Activated CD4-positive, alpha-beta memory T cell treated with anti-CD3 and anti-CD28 coated beads, Interleukin-2, amount 10 ng/mL, durations not matched to agents 7 days and 5 days (primary cell): ENCODE measurements at regions of chr22 and their contacts with region 1.

Region 1: DNA sequence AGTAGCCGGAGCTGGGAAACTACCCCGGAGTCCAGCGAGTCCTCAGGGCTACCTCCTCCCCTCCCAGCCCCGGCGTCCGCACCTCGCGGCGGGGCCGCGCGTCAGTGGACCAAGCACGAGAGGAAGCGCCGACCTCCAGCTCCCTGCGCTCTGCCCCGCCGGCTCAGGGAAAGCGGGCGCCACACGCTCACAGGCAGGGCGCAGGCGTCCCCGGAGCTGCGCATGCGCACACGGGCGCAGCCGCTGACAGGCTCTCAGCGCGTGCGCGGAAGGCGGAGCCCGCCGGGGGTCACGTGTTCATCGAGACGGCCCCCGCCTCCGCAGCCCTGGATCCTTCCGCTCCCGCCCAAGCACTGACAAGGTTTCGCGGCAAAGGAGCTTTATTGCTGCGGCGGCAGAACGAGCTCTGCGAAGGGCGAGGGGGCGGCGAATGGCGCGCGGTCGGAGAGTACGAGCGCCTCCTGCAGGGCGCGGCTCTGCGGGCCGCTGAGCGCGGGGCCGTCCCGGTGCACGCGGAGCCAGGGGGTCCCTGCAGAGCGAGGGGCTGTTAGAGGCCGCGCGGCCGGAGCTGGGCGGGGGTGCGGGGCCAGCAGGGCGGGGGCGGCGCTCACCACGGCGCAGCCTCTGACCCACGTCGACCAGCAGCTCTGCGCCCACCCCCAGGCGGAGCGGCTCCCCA is at the start of gene SCO2:
- DNase-seq: peak; percentile 98
- H3K4me3 Mint-ChIP-seq: peak within 1 kb of the TSS; percentile 86
- H3K27ac Mint-ChIP-seq: peak within 1 kb of the TSS; percentile 89
- H3K4me1 Mint-ChIP-seq: peaks cover 43% of the 10 kb centered on the region
- H3K27me3 Mint-ChIP-seq: no peaks in the 10 kb centered on the region
- total RNA-seq, gene SCO2: 6.4 to 7.0 TPM

Region 2: DNA sequence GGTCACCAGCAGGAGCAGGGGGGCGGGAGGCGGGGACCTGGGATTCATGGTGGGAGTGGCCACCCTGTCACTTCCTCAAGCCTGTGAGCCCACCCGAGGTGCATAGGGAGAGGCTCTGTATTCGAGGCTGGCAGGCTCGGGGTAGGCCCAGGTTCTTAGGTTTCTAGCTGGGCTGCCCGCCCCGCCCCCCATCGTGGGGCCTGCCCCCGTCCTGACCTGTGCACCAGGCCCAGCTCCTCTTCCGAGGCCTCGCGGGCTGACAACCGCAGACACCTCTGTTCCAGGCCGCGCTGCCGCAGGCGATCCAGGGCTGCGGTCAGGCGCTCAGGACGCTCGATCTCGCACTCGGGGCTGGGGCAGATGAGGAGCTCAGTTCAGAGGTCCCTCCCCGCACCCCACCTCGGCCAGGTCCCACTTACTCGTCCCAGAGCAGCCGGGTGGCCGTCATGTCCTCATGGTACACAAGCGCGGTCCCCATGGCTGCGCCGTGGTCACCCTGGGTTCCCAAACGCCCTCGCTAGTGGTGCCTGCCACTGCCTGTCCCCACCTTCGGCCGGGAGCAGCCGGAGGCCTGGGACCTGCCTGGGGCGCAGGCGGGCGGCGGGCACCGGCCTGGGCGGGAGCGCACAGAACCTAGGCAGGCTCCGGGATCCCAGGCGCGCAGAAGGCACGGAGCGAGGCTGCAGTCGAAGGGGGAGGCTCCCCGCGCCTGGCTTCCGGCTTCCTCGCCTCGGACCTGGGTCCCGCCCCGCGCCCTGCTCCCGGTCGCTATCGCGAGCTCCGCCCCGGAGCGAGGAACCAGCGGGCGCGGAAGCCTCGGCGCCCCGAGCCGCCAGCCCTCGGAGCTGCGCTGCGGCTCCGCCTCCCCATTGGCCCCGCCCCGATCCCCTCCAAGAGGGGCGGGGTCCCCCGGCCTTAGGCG is 274.7 kb before region 1 on chr22 and contains the start of gene HDAC10:
- CTCF ChIA-PET with region 1: interaction called, 6 read pairs
- POLR2A ChIA-PET with region 1: interaction called, 16 read pairs
- DNase-seq: peak; percentile 90
- H3K4me3 Mint-ChIP-seq: peak within 1 kb of the TSS; percentile 82
- H3K27ac Mint-ChIP-seq: peak within 1 kb of the TSS; percentile 69
- H3K4me1 Mint-ChIP-seq: peaks cover 29% of the 10 kb centered on the region
- H3K27me3 Mint-ChIP-seq: no peaks in the 10 kb centered on the region
- total RNA-seq, gene HDAC10: 83.7 to 90.0 TPM

Region 3: GRCh38 chr22:50474668-50475492 is 50.6 kb before region 1 on chr22 and contains the start of gene SBF1:
- CTCF ChIA-PET with region 1: interaction called, 21 read pairs
- POLR2A ChIA-PET with region 1: interaction called, 48 read pairs
- DNase-seq: peak; percentile 91
- H3K4me3 Mint-ChIP-seq: peak within 1 kb of the TSS; percentile 92
- H3K27ac Mint-ChIP-seq: peak within 1 kb of the TSS; percentile 97
- H3K4me1 Mint-ChIP-seq: peaks cover 52% of the 10 kb centered on the region
- H3K27me3 Mint-ChIP-seq: peaks cover 3% of the 10 kb centered on the region
- total RNA-seq, gene SBF1: 181 to 196 TPM

Region 4: DNA sequence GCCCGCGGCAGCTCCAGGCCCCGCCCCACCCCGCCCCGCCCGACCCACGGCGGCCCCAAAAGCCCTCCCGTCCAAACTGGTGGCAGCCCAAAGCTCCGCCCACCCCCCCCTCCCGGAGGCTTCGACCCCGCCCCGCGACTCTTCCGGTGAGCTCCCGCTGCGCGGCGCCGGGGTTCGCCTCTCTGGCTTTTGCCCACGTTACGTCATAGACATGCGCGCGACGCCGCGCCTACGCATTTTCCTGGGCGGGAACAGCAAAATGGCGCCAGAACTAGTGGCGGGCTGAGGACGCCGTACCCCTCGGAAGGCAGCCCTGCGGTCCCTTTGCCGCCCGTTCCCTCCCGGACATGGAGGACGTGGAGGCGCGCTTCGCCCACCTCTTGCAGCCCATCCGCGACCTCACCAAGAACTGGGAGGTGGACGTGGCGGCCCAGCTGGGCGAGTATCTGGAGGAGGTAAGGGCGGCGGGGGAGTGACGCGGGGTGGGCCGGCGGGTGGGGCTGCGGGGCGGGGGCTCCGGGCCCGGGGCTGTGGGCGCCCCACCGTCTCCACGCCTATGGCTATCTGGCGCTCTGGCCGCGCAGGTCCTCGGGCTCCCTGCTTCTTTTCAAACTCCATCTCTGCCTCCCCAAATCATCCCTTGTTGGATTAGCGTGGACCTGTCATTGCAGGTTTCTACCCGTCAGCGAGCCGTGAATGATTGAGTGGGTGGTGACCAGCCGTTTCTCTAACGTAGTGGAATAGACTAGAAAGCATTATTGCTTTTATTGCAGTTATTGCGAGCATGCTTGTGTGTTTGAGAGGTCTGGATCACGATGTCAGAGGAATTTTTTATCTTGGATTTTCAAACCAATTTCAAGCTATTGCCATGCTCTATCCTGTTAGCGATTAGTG is 17.3 kb before region 1 on chr22 and contains the start of gene NCAPH2:
- CTCF ChIA-PET with region 1: interaction called, 102 read pairs
- POLR2A ChIA-PET with region 1: interaction called, 321 read pairs
- DNase-seq: peak; percentile 98
- H3K4me3 Mint-ChIP-seq: peak within 1 kb of the TSS; percentile 96
- H3K27ac Mint-ChIP-seq: peak within 1 kb of the TSS; percentile 95
- H3K4me1 Mint-ChIP-seq: peaks cover 36% of the 10 kb centered on the region
- H3K27me3 Mint-ChIP-seq: no peaks in the 10 kb centered on the region
- total RNA-seq, gene NCAPH2: 105 to 108 TPM

Region 5: DNA sequence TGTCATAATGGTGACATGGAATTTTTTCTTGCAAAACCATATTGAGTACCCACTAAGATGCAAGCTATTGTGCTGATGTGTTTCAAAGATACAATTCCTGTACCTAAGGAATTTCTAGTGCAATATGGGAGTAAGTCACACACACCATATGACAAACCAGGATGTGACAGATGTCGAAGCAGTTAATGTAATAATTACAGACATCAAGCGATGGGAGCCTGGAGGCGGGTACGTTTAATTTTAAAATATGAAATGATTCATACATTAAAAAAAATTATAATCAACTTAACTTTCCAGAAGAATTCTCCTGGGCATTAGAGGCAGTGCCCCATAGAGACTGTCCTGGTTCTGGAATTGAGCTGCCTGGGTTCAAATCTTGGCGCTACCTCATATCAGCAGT is 31.2 kb after region 1 on chr22:
- CTCF ChIA-PET with region 1: interaction called, 14 read pairs
- POLR2A ChIA-PET with region 1: interaction called, 151 read pairs
- DNase-seq: no peak
- H3K4me3 Mint-ChIP-seq: no peak overlapping the region
- H3K27ac Mint-ChIP-seq: no peak overlapping the region
- H3K4me1 Mint-ChIP-seq: peaks cover 10% of the 10 kb centered on the region
- H3K27me3 Mint-ChIP-seq: peaks cover 20% of the 10 kb centered on the region

Region 6: DNA sequence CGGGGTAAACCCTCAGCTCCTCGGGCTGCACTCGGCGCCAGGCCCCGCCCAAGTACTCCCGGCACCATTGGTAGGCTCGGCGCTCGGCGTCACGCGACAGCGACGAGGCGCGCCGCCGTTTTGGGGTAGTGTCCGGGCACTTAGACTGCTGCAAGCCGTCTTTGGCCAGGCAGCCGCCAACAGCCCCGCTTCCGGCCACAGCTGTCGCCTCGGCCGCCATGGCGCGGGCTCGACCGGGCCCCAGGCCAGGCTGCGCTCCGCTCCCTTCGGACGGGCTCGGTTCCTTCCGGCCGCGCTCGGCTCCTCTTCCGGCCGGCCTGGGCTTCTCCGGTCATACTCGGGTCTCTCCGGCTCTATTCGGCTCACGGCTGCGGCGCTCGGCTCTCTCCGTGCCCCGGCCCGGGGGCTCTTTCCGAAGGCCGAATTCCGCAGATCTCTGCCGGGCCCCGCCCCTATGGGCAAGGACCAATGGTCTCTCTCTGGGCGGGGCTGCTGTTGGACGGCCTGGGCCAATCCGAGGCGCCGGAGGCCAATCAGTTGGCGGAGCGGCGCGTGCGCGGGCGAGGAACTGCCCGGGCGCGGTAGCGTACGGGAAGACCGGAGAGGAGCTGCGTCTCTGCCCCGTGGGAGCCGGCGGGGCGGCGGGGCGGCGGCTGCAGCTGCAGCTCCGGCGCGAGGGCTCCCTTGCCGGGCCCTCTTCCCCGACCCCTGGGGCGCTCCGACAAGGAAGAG is 57.2 kb after region 1 on chr22 and contains the start of gene CHKB:
- CTCF ChIA-PET with region 1: interaction called, 9 read pairs
- POLR2A ChIA-PET with region 1: interaction called, 51 read pairs
- DNase-seq: peak; percentile 99
- H3K4me3 Mint-ChIP-seq: peak within 1 kb of the TSS; percentile 81
- H3K27ac Mint-ChIP-seq: peak within 1 kb of the TSS; percentile 93
- H3K4me1 Mint-ChIP-seq: peaks cover 34% of the 10 kb centered on the region
- H3K27me3 Mint-ChIP-seq: no peaks in the 10 kb centered on the region
- total RNA-seq, gene CHKB: 101 to 111 TPM